Left cardiac atrium (tissue), 4 donors: ENCODE measurements at regions of chr22 and their contacts with region 1.

Region 1: GRCh38 chr22:28051787-28052356 is 132.8 kb upstream of the PITPNB start:
- DNase-seq: peak; percentile 73
- ATAC-seq: peak; percentile 65 to 68

Region 2: DNA sequence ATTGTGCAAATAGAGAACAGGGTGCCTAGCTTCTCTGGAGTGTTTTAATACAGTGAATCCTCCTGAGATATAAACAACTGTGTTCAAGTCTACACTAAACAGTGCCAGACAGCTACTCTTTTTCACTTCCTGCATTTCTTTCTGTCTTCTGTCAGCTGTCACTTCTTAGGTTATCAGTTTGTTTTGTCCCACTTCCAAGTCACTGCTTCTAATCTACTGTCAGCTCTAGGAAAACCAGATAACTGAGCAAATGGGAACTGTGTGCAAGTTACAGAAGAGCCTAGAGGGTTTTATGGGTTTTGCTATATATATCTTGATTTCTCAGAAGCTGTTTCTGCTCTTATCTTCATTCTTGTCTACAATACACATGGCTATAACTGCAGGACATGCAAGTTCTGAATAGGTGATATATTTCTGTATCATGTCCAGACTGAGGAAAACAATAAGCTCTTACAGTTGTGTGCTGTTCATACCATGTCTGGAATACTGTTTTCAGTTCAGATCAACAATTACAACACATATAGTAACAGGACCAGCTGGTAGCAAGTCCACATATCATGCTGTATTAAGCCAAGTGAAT is 138.6 kb before region 1 on chr22:
- intact Hi-C with region 1: no loop called
- DNase-seq: no peak
- ATAC-seq: peak; percentile 90 to 95

Region 3: DNA sequence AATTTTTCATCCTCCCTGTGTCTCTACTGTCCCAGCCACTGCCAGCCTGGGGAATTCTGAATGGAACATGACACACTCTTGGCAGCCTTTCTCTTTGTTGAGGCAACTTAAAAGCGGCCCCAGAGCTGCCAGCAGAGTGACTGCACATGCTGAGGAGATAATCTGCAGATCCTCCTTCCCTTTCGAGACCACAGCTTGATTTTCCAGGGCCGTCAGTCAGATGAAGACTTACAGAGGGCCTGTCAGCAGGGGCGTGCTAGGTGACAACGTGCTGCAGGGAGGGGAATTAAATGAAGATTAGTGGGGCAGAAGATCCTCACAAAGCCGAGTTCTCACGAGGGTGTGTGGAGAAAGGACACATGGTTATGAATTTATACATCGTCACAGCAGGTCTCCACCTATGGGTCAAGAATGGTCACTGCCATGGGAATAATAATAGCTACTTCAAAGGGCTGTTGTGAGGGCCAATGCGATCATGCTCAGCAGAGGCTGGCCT is 60.7 kb after region 1 on chr22:
- intact Hi-C with region 1: loop called in 1 of 2 experiments (anchors 10 kb)
- DNase-seq: peak; percentile 44
- ATAC-seq: peak; percentile 55 to 81

Region 4: DNA sequence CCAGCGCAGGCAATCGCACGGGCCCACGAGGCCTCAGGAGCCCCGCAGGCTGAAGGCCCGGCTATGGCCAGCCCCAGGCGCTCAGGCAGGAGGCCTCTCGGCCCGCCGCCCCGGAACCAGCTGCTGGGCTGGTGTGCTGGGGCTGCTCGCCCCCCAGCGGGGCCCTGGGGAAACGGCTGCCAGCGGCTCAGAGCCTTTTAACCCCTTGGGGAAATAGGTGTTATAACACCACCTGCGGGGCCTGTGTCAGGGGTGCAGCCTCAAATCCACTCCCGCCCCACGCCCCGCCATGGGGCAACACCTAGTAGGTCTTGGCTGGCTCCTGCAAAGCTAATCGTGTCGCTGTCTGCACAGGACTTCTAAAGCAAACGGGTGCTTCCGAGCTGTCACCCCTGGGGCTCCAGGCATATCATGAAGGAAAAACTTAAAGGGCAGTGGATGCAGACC is 390.4 kb after region 1 on chr22:
- intact Hi-C with region 1: loop called in 1 of 2 experiments (anchors 5 kb)
- DNase-seq: peak; percentile 76
- ATAC-seq: peak; percentile 87 to 95

Region 5: DNA sequence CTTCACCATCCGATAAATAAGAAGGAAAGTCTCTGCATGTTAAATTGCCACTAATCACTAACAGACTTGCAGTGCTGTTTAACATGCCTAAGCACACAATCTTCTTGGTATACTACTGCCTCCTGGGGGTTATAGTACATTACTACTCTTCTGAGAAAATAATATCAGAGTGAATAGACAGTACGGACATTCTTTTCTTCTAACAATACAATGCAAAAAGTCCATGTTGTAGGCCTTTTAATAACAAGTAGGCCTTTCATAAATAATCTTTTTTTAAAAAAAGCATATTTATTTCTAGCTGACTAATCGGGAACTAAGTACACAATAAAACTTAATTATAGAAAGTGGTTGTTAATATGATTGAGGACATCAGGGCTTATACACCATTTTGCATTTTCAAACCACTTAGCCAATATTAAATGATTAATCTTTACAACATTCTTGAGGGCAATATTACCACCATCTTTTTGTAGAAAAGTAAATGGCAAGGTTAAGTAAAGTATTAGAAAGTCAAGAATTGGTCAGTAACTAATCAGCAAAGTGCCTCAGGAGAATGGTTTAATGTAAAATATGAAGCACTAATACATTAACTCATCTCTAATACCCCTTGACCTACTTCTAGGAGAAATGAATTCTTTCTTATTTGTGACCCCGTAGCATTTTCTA is 543.1 kb after region 1 on chr22:
- intact Hi-C with region 1: loop called (anchors 2 to 5 kb)
- DNase-seq: no peak
- ATAC-seq: peak; percentile 82 to 90